ENCODE measurements at regions of chr11 and their contacts with region 1.

Region 1: DNA sequence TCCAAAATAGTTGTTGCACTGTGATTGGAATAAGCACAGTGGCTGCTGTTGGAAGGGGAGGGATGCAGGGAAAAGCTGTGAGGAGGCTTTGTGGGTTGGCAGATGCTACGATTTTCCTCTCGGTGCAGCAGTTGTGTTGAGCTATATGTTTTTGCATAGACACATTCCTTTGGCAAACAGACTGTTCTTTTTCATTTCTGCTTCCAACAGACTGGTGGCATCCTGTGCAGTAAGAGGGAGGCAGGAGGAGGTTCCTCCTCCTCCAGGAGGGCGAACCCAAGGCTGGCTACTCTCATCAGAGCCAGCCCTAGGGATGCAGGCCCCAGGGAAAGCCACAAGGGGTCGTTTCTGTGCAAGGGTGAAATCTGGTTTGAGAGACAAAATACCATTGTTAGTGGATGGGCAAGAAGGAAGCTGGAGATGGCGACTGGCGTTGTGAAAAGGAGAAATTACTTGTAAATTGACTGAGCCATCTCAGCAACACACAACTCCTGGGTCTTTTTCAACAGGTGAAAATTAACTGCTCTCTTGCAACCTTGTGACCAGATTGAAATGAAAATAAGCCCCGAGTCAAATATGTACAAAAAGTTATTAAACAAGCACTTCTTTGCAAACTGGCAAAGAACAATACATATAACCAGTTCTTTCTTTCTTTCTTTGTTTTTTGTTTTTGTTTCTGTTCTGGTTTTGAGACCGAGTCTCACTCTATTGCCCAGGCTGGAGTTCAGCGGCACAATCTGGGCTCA is 26.5 kb upstream of the UBASH3B start:
- DNase-seq: peak; percentile 81
- ATAC-seq: peak; percentile 86
- H3K4me3 Mint-ChIP-seq: no peak overlapping the region
- H3K27ac Mint-ChIP-seq: no peak overlapping the region
- H3K4me1 Mint-ChIP-seq: peaks cover 33% of the 10 kb centered on the region
- H3K27me3 Mint-ChIP-seq: peaks cover 2% of the 10 kb centered on the region

Region 2: DNA sequence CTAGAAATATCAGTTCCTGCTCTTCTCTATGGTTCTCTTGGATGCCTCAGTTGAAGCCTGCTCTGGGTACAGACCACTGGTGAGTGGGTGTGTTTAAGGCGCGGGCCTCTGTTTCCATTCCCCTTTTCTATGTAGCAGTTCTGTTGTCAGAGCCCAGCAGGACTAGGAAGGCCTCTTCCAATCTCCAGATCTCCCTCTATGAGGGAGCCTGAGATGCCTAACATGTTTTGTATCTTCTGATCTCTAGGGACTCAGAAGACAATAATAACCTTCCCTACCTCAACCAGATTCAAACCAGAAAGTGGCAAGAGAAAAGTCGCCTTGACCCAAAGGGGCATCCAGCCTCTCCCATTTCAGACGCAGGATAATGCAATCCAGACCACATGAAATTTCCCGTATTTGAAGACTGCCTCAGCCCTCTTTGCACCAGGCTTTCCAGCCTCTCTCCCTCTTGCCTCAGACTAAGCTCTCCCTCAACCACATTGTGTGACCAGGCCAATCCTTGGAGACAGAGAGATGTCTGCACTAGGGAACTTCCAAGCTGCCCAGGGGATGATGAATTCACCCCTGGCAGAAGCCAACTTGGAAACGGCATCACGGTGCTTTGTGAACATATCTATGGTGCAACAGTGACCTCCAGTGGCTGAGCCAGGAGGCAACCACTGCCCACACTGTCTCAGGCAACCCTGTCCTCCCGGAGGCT is 123.5 kb before region 1 on chr11:
- CTCF ChIA-PET with region 1: no interaction called
- POLR2A ChIA-PET with region 1: no interaction called
- DNase-seq: peak; percentile 60
- ATAC-seq: peak; percentile 81
- H3K4me3 Mint-ChIP-seq: no peak overlapping the region
- H3K27ac Mint-ChIP-seq: no peak overlapping the region
- H3K4me1 Mint-ChIP-seq: no peaks in the 10 kb centered on the region
- H3K27me3 Mint-ChIP-seq: peaks cover 12% of the 10 kb centered on the region

Region 3: GRCh38 chr11:122673701-122674100 is 44.7 kb after region 1 on chr11:
- CTCF ChIA-PET with region 1: interaction called, 11 read pairs
- POLR2A ChIA-PET with region 1: no interaction called
- DNase-seq: no peak
- ATAC-seq: no peak
- H3K4me3 Mint-ChIP-seq: no peak overlapping the region
- H3K27ac Mint-ChIP-seq: peak overlapping the region; percentile 8
- H3K4me1 Mint-ChIP-seq: peaks cover 71% of the 10 kb centered on the region
- H3K27me3 Mint-ChIP-seq: no peaks in the 10 kb centered on the region

Region 4: GRCh38 chr11:122749005-122749687 is 120.2 kb after region 1 on chr11:
- CTCF ChIA-PET with region 1: interaction called, 441 read pairs
- POLR2A ChIA-PET with region 1: interaction called, 3 read pairs
- DNase-seq: peak; percentile 80
- ATAC-seq: peak; percentile 72
- H3K4me3 Mint-ChIP-seq: peak overlapping the region; percentile 24
- H3K27ac Mint-ChIP-seq: peak overlapping the region; percentile 69
- H3K4me1 Mint-ChIP-seq: peaks cover 39% of the 10 kb centered on the region
- H3K27me3 Mint-ChIP-seq: peaks cover 2% of the 10 kb centered on the region

Region 5: GRCh38 chr11:122765487-122766131 is 136.6 kb after region 1 on chr11:
- CTCF ChIA-PET with region 1: interaction called, 441 read pairs
- POLR2A ChIA-PET with region 1: no interaction called
- DNase-seq: no peak
- ATAC-seq: no peak
- H3K4me3 Mint-ChIP-seq: no peak overlapping the region
- H3K27ac Mint-ChIP-seq: no peak overlapping the region
- H3K4me1 Mint-ChIP-seq: peaks cover 27% of the 10 kb centered on the region
- H3K27me3 Mint-ChIP-seq: no peaks in the 10 kb centered on the region

Region 6: DNA sequence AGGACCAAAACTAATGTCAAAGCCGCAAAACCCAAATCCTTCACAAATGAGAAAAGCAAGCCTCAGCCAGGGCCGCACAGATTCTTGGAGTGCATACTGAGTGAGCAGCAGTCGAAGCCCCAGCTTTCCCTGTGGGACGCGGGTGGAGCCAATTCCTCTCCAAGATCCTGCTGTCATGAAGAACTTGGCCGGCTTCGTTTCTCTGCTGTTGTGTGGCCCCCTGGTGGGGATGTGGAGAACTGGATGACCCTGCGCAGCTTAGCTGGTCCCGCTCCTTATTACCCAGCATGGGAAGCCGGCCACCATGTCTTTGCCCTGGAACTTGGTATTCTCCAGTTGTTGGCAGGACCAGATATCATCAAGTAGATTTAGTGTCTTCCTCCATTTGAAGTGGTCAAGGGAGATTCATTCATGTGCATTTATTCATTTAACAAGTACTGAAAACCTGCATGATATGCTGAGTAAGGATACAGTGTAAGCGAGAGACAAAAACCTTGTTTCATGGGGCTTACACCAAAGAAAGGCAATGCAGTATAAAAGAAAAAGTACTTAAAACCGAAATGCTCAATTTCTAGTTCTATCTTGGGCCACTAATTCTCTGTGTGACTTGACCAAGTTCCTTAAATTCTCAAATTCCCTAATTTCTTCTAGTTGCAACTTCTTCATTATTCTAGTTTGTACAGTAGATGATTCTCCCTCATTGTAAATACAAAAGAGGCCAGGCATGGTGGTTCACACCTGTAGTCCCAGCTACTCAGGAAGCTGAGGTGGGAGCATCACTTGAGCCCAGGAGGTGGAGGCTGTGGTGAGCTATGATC is 152.6 kb after region 1 on chr11:
- CTCF ChIA-PET with region 1: interaction called, 83 read pairs
- POLR2A ChIA-PET with region 1: no interaction called
- DNase-seq: peak; percentile 80
- ATAC-seq: peak; percentile 89
- H3K4me3 Mint-ChIP-seq: no peak overlapping the region
- H3K27ac Mint-ChIP-seq: no peak overlapping the region
- H3K4me1 Mint-ChIP-seq: peaks cover 33% of the 10 kb centered on the region
- H3K27me3 Mint-ChIP-seq: no peaks in the 10 kb centered on the region

Region 7: DNA sequence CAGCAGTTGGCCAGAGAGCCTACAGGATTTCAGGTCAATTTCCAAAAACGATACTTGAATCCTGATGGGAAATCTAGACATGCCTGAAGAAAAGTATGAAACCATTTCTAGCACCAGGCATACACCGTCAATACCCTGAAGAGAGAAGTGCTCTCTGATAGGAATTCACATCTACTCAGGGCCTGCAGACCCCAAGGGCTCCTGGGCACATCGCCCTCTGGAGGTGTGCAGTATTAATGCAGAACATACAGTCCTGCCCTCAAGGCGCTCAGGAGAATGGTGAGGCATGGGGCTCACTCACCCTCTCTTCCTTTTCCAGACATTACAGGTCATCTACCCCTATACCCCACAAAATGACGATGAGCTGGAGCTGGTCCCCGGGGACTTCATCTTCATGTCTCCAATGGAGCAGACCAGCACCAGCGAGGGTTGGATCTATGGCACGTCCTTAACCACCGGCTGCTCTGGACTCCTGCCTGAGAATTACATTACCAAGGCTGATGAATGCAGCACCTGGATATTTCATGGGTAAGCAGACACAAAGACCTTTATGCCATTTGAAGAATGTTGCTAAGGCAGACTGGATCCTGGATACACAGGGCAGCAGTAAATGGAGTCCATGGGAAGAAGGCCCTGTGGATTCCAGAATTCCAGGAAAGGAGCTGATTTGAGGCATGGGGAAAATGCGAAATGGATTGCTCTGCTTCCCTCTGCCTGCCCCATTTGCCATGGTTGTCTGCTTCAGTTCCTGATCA is 160.0 kb after region 1 on chr11:
- CTCF ChIA-PET with region 1: interaction called, 83 read pairs
- POLR2A ChIA-PET with region 1: no interaction called
- DNase-seq: no peak
- ATAC-seq: no peak
- H3K4me3 Mint-ChIP-seq: no peak overlapping the region
- H3K27ac Mint-ChIP-seq: no peak overlapping the region
- H3K4me1 Mint-ChIP-seq: no peaks in the 10 kb centered on the region
- H3K27me3 Mint-ChIP-seq: no peaks in the 10 kb centered on the region

Region 8: GRCh38 chr11:122832721-122833470 is 203.9 kb after region 1 on chr11:
- CTCF ChIA-PET with region 1: interaction called, 10 read pairs
- POLR2A ChIA-PET with region 1: no interaction called
- DNase-seq: no peak
- ATAC-seq: peak; percentile 33
- H3K4me3 Mint-ChIP-seq: no peak overlapping the region
- H3K27ac Mint-ChIP-seq: peak overlapping the region; percentile 44
- H3K4me1 Mint-ChIP-seq: peaks cover 24% of the 10 kb centered on the region
- H3K27me3 Mint-ChIP-seq: no peaks in the 10 kb centered on the region

Region 9: GRCh38 chr11:122981388-122982264 is 352.6 kb after region 1 on chr11 and contains the start of gene BSX:
- CTCF ChIA-PET with region 1: no interaction called
- POLR2A ChIA-PET with region 1: no interaction called
- DNase-seq: peak; percentile 72
- ATAC-seq: peak; percentile 74
- H3K4me3 Mint-ChIP-seq: no peak within 1 kb of the TSS
- H3K27ac Mint-ChIP-seq: no peak within 1 kb of the TSS
- H3K4me1 Mint-ChIP-seq: peaks cover 31% of the 10 kb centered on the region
- H3K27me3 Mint-ChIP-seq: peaks cover 87% of the 10 kb centered on the region
- total RNA-seq, gene BSX: not detected